Natural killer cell (primary cell): ENCODE measurements at regions of chr9 and their contacts with region 1.

Region 1: GRCh38 chr9:107340920-107341632 is 58.0 kb downstream of the RAD23B start:
- DNase-seq: peak; percentile 79 to 87
- ATAC-seq: peak; percentile 77 to 90 (median 89)
- H3K4me3 ChIP-seq: no peak overlapping the region
- H3K4me3 Mint-ChIP-seq: no peak overlapping the region
- H3K27ac ChIP-seq: no peak overlapping the region
- H3K27ac Mint-ChIP-seq: peak overlapping the region in 1 of 2 donors; percentile 69
- H3K4me1 ChIP-seq: peaks cover 4% of the 10 kb centered on the region
- H3K4me1 Mint-ChIP-seq: peaks cover 5 to 18% of the 10 kb centered on the region in 2 donors
- H3K27me3 ChIP-seq: no peaks in the 10 kb centered on the region
- H3K27me3 Mint-ChIP-seq: peaks cover 0 to 1% of the 10 kb centered on the region in 2 donors
- CTCF ChIP-seq: peak; percentile 94

Region 2: GRCh38 chr9:107137495-107138202 is 203.4 kb before region 1 on chr9:
- intact Hi-C with region 1: loop called (anchors 5 kb)
- DNase-seq: peak in 1 of 2 donors; percentile 44
- ATAC-seq: peak in 2 of 3 donors; percentile 38 to 47
- H3K4me3 ChIP-seq: no peak overlapping the region
- H3K4me3 Mint-ChIP-seq: no peak overlapping the region
- H3K27ac ChIP-seq: no peak overlapping the region
- H3K27ac Mint-ChIP-seq: no peak overlapping the region
- H3K4me1 ChIP-seq: no peaks in the 10 kb centered on the region
- H3K4me1 Mint-ChIP-seq: no peaks in the 10 kb centered on the region
- H3K27me3 ChIP-seq: no peaks in the 10 kb centered on the region
- H3K27me3 Mint-ChIP-seq: peaks cover 19 to 21% of the 10 kb centered on the region in 2 donors
- CTCF ChIP-seq: peak; percentile 77

Region 3: DNA sequence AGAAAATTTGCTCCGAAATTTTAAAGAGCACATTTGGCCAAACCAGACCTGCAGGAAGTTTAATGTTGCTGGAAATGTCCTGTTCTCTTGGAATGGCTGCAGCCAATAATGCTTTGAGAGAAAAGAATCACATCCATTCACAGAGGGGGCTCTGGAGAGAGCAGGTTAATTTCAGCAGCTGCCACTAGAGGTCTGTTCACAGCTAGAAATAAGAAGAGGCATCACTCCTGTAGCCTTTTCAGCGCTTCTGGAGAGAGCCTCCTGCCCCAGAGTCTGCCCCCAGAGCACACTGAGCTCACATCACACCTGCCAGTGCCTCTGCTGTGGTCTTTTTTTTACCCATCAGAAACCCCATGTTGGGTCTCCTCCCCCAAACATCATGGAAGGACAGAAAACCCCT is 182.8 kb before region 1 on chr9:
- intact Hi-C with region 1: loop called (anchors 5 kb)
- DNase-seq: peak in 1 of 2 donors; percentile 13
- ATAC-seq: peak; percentile 47 to 75 (median 72)
- H3K4me3 ChIP-seq: no peak overlapping the region
- H3K4me3 Mint-ChIP-seq: no peak overlapping the region
- H3K27ac ChIP-seq: no peak overlapping the region
- H3K27ac Mint-ChIP-seq: no peak overlapping the region
- H3K4me1 ChIP-seq: no peaks in the 10 kb centered on the region
- H3K4me1 Mint-ChIP-seq: no peaks in the 10 kb centered on the region
- H3K27me3 ChIP-seq: no peaks in the 10 kb centered on the region
- H3K27me3 Mint-ChIP-seq: peaks cover 10 to 25% of the 10 kb centered on the region in 2 donors
- CTCF ChIP-seq: peak; percentile 24

Region 4: GRCh38 chr9:107239474-107239873 is 101.6 kb before region 1 on chr9:
- intact Hi-C with region 1: loop called (anchors 1 kb)
- DNase-seq: peak in 1 of 2 donors; percentile 54
- ATAC-seq: peak in 2 of 3 donors; percentile 60 to 77
- H3K4me3 ChIP-seq: no peak overlapping the region
- H3K4me3 Mint-ChIP-seq: no peak overlapping the region
- H3K27ac ChIP-seq: no peak overlapping the region
- H3K27ac Mint-ChIP-seq: no peak overlapping the region
- H3K4me1 ChIP-seq: no peaks in the 10 kb centered on the region
- H3K4me1 Mint-ChIP-seq: peaks cover 0 to 8% of the 10 kb centered on the region in 2 donors
- H3K27me3 ChIP-seq: no peaks in the 10 kb centered on the region
- H3K27me3 Mint-ChIP-seq: peaks cover 3 to 10% of the 10 kb centered on the region in 2 donors
- CTCF ChIP-seq: peak; percentile 21

Region 5: GRCh38 chr9:107700847-107701246 is 359.8 kb after region 1 on chr9:
- intact Hi-C with region 1: no loop called
- DNase-seq: no peak
- ATAC-seq: no peak
- H3K4me3 ChIP-seq: no peak overlapping the region
- H3K4me3 Mint-ChIP-seq: no peak overlapping the region
- H3K27ac ChIP-seq: no peak overlapping the region
- H3K27ac Mint-ChIP-seq: no peak overlapping the region
- H3K4me1 ChIP-seq: no peaks in the 10 kb centered on the region
- H3K4me1 Mint-ChIP-seq: peaks cover 0 to 7% of the 10 kb centered on the region in 2 donors
- H3K27me3 ChIP-seq: no peaks in the 10 kb centered on the region
- H3K27me3 Mint-ChIP-seq: peaks cover 0 to 3% of the 10 kb centered on the region in 2 donors
- CTCF ChIP-seq: no peak